ENCODE measurements at regions of chr6 and their contacts with region 1.

Region 1: GRCh38 chr6:45922728-45923351 is 92.8 kb downstream of the CLIC5 start:
- DNase-seq: peak; percentile 61
- H3K4me3 ChIP-seq: no peak overlapping the region
- H3K27ac ChIP-seq: no peak overlapping the region
- H3K4me1 ChIP-seq: peaks cover 0 to 8% (median 0%) of the 10 kb centered on the region in 4 donors
- H3K27me3 ChIP-seq: no peaks in the 10 kb centered on the region
- CTCF ChIP-seq: peak; percentile 38 to 57 (median 49)
- EP300 ChIP-seq: no peak
- POLR2A ChIP-seq: no peak

Region 2: DNA sequence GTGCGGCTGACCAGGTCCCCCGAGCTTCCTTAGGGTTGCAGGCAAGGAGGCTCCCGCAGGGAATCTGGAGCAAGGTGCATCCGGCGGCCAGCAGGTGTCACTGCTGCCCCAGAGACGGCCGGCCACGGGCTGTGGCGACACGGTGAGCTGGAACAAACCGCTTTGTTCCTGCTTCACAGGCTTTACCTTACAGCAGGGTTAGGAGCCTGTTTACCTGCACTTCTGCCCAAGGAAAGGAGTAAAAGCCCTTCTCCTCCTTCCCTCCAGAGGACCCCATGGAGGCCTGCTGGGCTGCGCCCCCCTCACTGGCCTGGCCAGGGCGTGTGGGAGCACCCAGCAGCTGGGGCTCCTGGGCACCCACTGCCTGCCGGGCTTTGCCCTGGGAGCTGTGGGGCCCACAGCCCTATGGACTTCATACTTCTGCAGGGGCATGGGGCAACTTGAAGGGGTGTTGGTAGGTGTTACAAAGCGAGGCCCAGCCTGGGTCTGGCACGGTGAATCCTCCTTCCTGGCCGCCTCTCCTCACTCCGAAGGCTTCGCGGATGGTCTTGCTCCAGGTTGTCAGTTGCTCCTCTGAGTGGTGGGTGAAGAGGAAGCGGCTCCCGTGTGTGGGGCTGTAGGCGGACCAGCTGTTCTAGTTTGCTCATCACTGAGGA is 1446.9 kb before region 1 on chr6:
- in situ Hi-C with region 1: loop called in 2 of 4 experiments (anchors 25 kb)
- intact Hi-C with region 1: no loop called
- DNase-seq: peak; percentile 81
- H3K4me3 ChIP-seq: no peak overlapping the region
- H3K27ac ChIP-seq: no peak overlapping the region
- H3K4me1 ChIP-seq: peaks cover 0 to 6% (median 3%) of the 10 kb centered on the region in 4 donors
- H3K27me3 ChIP-seq: peaks cover 3% of the 10 kb centered on the region
- CTCF ChIP-seq: peak; percentile 87 to 89 (median 88)
- EP300 ChIP-seq: no peak
- POLR2A ChIP-seq: no peak

Region 3: GRCh38 chr6:44630125-44631028 is 1292.5 kb before region 1 on chr6:
- in situ Hi-C with region 1: loop called in 1 of 4 experiments (anchors 25 kb)
- intact Hi-C with region 1: no loop called
- DNase-seq: peak; percentile 30
- H3K4me3 ChIP-seq: no peak overlapping the region
- H3K27ac ChIP-seq: no peak overlapping the region
- H3K4me1 ChIP-seq: peaks cover 0 to 6% (median 2%) of the 10 kb centered on the region in 4 donors
- H3K27me3 ChIP-seq: peaks cover 5% of the 10 kb centered on the region
- CTCF ChIP-seq: peak in 4 of 5 experiments; percentile 13 to 30 (median 22)
- EP300 ChIP-seq: no peak
- POLR2A ChIP-seq: no peak

Region 4: GRCh38 chr6:44842616-44843015 is 1080.2 kb before region 1 on chr6:
- in situ Hi-C with region 1: no loop called
- intact Hi-C with region 1: no loop called
- DNase-seq: no peak
- H3K4me3 ChIP-seq: no peak overlapping the region
- H3K27ac ChIP-seq: no peak overlapping the region
- H3K4me1 ChIP-seq: no peaks in the 10 kb centered on the region
- H3K27me3 ChIP-seq: no peaks in the 10 kb centered on the region
- CTCF ChIP-seq: no peak
- EP300 ChIP-seq: no peak
- POLR2A ChIP-seq: no peak